ENCODE measurements at regions of chr12 and their contacts with region 1.

Region 1: DNA sequence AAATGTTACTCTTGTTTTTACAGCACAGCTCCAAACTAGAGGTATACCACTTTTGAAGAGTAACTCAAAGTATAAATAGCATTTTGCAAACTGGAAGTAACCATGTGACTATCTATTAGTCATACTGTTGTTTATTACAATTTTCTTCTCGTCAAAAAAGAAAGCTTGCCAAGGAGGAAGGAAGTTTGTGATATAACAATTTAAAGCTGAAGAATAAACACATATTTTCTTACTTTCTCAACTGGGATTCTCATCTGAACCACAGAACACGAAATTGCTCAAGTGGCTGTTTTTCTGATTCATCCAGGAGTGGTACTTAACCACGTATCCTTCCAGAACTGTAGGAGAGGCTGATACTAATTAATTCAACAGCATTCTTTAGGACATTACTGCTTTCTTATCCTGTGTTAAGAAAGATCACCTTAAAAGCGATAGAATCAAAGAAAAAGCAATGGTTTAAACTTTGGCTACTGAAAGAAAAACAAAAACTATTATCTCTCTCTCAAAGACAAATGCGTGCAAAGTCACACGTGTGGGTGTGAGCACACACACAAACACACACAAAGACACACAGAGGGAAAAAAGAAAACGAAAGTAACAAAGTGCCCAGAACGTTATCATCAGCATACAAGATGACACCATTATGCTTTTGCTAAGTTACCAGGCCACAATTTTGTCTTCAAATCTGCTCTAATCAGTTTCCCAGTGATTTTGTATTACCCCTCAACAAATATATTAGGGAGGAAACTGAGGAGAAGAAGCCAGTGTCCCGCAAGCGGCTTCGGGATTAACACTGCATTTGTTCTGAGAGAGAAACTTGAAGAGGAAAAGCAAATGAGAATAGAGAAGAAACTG is at the start of gene CLEC2B:
- DNase-seq: peak; percentile 88
- H3K4me3 Mint-ChIP-seq: peak within 1 kb of the TSS; percentile 90
- H3K27ac Mint-ChIP-seq: peak within 1 kb of the TSS; percentile 100
- H3K4me1 Mint-ChIP-seq: peaks cover 51% of the 10 kb centered on the region
- H3K27me3 Mint-ChIP-seq: no peaks in the 10 kb centered on the region
- CTCF ChIP-seq: no peak
- total RNA-seq, gene CLEC2B: 1.8 and 2.2 TPM in 2 replicates

Region 2: GRCh38 chr12:9731797-9732196 is 137.7 kb before region 1 on chr12:
- CTCF ChIA-PET with region 1: no interaction called
- POLR2A ChIA-PET with region 1: no interaction called
- intact Hi-C with region 1: no loop called
- DNase-seq: no peak
- H3K4me3 Mint-ChIP-seq: no peak overlapping the region
- H3K27ac Mint-ChIP-seq: no peak overlapping the region
- H3K4me1 Mint-ChIP-seq: peaks cover 5% of the 10 kb centered on the region
- H3K27me3 Mint-ChIP-seq: no peaks in the 10 kb centered on the region
- CTCF ChIP-seq: no peak

Region 3: DNA sequence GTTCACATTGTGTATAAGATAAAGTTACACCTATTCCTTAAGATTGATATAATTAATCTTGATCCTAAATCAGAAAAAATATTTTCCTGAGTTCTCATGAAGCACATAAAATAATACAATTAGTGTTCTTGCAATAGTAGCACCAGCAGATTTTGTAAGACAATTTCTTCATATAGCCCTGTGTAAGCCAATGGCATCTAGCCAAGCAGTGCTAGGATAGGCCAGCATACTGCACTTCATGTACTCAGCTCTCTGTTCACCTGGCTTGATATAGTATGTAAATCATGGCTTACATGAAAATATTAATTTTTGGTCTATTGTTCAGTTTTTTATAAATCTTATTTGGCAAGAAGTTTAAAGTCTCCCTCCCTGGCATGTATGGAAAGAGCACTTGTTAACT is 13.6 kb after region 1 on chr12:
- CTCF ChIA-PET with region 1: interaction called, 6 read pairs
- POLR2A ChIA-PET with region 1: interaction called, 46 read pairs
- intact Hi-C with region 1: no loop called
- DNase-seq: peak; percentile 83
- H3K4me3 Mint-ChIP-seq: no peak overlapping the region
- H3K27ac Mint-ChIP-seq: no peak overlapping the region
- H3K4me1 Mint-ChIP-seq: peaks cover 6% of the 10 kb centered on the region
- H3K27me3 Mint-ChIP-seq: no peaks in the 10 kb centered on the region
- CTCF ChIP-seq: no peak

Region 4: GRCh38 chr12:10540776-10541205 is 671.3 kb after region 1 on chr12:
- CTCF ChIA-PET with region 1: no interaction called
- POLR2A ChIA-PET with region 1: no interaction called
- intact Hi-C with region 1: no loop called
- DNase-seq: peak; percentile 22
- H3K4me3 Mint-ChIP-seq: no peak overlapping the region
- H3K27ac Mint-ChIP-seq: no peak overlapping the region
- H3K4me1 Mint-ChIP-seq: peaks cover 13% of the 10 kb centered on the region
- H3K27me3 Mint-ChIP-seq: no peaks in the 10 kb centered on the region
- CTCF ChIP-seq: no peak

Measured in MCF 10A (cell line).